ENCODE measurements at regions of chr1 and their contacts with region 1.

Region 1: DNA sequence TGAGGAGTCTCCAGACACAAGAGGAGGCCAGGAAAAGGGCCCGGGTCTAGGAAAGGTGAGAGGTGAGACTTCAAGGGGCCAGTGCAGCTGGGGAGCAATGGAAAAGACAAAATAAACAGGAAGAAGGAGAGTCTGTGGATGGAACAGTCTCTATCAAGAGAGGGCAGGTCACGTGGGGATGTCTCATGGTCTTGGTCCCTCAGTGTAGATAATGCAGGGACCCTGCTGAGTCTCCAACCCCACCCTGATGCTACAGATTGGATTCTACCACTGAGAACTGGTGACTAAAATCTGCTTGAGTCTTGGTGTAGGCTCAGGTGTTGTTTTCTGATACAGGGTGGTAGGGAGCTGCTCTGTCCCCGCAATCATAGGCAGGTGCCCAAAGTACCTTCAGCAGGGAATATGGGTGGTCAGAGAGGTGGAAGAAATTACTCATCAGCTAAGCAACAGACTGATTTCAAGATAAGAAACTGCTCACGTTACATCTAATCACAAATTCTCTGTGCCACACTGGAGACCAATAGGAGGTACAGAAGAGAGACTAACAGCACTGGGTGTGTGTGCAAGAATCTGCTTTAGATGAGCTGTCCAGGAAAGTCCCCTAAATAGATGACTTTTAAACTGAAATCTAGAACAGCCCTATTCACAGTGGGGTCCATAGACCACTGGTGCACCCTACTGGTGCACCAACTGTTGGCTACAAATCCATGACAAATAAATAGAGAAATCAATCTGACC is 101.5 kb upstream of the TLR5 start:
- DNase-seq: peak in 1 of 9 donors; percentile 13
- ATAC-seq: peak; percentile 59
- H3K4me3 ChIP-seq: no peak overlapping the region
- H3K4me3 Mint-ChIP-seq: no peak overlapping the region
- H3K27ac ChIP-seq: no peak overlapping the region
- H3K27ac Mint-ChIP-seq: peak overlapping the region in 6 of 9 donors; percentile 1 to 76 (median 22)
- H3K4me1 ChIP-seq: peaks cover 13 to 43% of the 10 kb centered on the region in 2 donors
- H3K4me1 Mint-ChIP-seq: peaks cover 10 to 79% (median 47%) of the 10 kb centered on the region in 7 donors
- H3K27me3 ChIP-seq: no peaks in the 10 kb centered on the region
- H3K27me3 Mint-ChIP-seq: peaks cover 0 to 2% (median 0%) of the 10 kb centered on the region in 5 donors

Region 2: GRCh38 chr1:223133824-223134435 is 110.6 kb before region 1 on chr1:
- CTCF ChIA-PET with region 1: interaction called, 6 read pairs
- POLR2A ChIA-PET with region 1: interaction called, 3 read pairs
- intact Hi-C with region 1: loop called (anchors 1 to 5 kb)
- DNase-seq: peak; percentile 59 to 84 (median 73)
- ATAC-seq: peak; percentile 92
- H3K4me3 ChIP-seq: peak overlapping the region; percentile 41
- H3K4me3 Mint-ChIP-seq: peak overlapping the region; percentile 51 to 84 (median 74)
- H3K27ac ChIP-seq: no peak overlapping the region
- H3K27ac Mint-ChIP-seq: peak overlapping the region in 1 of 9 donors; percentile 41
- H3K4me1 ChIP-seq: peaks cover 4 to 12% of the 10 kb centered on the region in 2 donors
- H3K4me1 Mint-ChIP-seq: peaks cover 13 to 31% (median 22%) of the 10 kb centered on the region in 7 donors
- H3K27me3 ChIP-seq: no peaks in the 10 kb centered on the region
- H3K27me3 Mint-ChIP-seq: peaks cover 0 to 68% (median 5%) of the 10 kb centered on the region in 5 donors

Region 3: DNA sequence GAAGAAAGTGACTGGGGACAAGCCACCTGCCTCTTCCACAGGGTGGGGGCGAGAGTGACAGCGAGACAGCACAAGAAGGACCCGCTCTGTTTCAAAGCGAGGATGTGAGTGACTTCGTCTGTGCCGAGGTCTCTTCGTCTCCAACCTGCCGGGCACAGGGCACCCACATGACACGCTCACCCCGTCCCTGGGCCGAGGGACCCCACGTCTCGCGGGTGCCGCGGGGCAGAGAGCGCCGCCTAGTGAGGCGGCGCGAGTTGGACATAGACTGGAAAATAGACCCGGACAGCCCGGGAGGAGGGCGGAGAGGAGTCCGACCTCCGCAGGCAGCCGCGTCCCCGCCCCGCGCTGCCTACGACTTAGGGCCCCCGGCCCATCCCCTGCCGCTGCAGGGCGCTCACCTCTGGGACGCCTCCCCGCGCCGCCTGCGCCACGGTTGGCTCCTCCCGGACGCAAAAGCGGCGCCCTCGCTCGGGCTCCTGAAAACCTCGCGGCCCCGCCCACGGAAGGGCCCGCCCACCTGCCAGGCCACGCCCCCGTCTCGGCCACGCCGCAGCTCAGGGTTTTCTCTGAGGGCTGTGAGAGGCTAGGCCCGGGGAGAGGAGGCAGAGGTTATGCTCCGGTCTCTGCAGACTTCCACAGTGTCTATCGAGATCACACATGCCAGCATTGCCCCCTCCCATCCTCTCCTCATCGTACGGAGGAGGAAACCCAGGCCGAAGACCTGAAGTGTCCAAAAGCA is 101.6 kb before region 1 on chr1 and contains the start of gene TLR5:
- CTCF ChIA-PET with region 1: interaction called, 5 read pairs
- POLR2A ChIA-PET with region 1: no interaction called
- intact Hi-C with region 1: loop called in 1 of 2 experiments (anchors 2 kb)
- DNase-seq: peak; percentile 81 to 92 (median 87)
- ATAC-seq: peak; percentile 94
- H3K4me3 ChIP-seq: peak within 1 kb of the TSS; percentile 65
- H3K4me3 Mint-ChIP-seq: peak within 1 kb of the TSS; percentile 69 to 89 (median 81)
- H3K27ac ChIP-seq: peak within 1 kb of the TSS; percentile 69
- H3K27ac Mint-ChIP-seq: peak within 1 kb of the TSS in 8 of 9 donors; percentile 48 to 95 (median 90)
- H3K4me1 ChIP-seq: peaks cover 13 to 15% of the 10 kb centered on the region in 2 donors
- H3K4me1 Mint-ChIP-seq: peaks cover 13 to 35% (median 27%) of the 10 kb centered on the region in 7 donors
- H3K27me3 ChIP-seq: no peaks in the 10 kb centered on the region
- H3K27me3 Mint-ChIP-seq: peaks cover 0 to 10% (median 0%) of the 10 kb centered on the region in 5 donors
- total RNA-seq, gene TLR5: 3.1 to 8.0 (median 6.6) TPM in 4 of 5 experiments, not detected in the other

Region 4: GRCh38 chr1:223189903-223190724 is 54.4 kb before region 1 on chr1:
- CTCF ChIA-PET with region 1: no interaction called
- POLR2A ChIA-PET with region 1: no interaction called
- intact Hi-C with region 1: loop called in 1 of 2 experiments (anchors 5 kb)
- DNase-seq: peak in 7 of 9 donors; percentile 5 to 57 (median 13)
- ATAC-seq: peak; percentile 79
- H3K4me3 ChIP-seq: no peak overlapping the region
- H3K4me3 Mint-ChIP-seq: peak overlapping the region; percentile 8 to 76 (median 62)
- H3K27ac ChIP-seq: no peak overlapping the region
- H3K27ac Mint-ChIP-seq: peak overlapping the region; percentile 25 to 90 (median 61)
- H3K4me1 ChIP-seq: peaks cover 9 to 29% of the 10 kb centered on the region in 2 donors
- H3K4me1 Mint-ChIP-seq: peaks cover 10 to 70% (median 63%) of the 10 kb centered on the region in 7 donors
- H3K27me3 ChIP-seq: no peaks in the 10 kb centered on the region
- H3K27me3 Mint-ChIP-seq: peaks cover 0 to 17% (median 0%) of the 10 kb centered on the region in 5 donors

Region 5: GRCh38 chr1:223233410-223234169 is 10.9 kb before region 1 on chr1:
- CTCF ChIA-PET with region 1: no interaction called
- POLR2A ChIA-PET with region 1: interaction called, 4 read pairs
- intact Hi-C with region 1: loop called in 1 of 2 experiments (anchors 1 kb)
- DNase-seq: peak in 1 of 9 donors; percentile 18
- ATAC-seq: no peak
- H3K4me3 ChIP-seq: no peak overlapping the region
- H3K4me3 Mint-ChIP-seq: peak overlapping the region in 5 of 10 donors; percentile 4 to 58 (median 24)
- H3K27ac ChIP-seq: peak overlapping the region; percentile 27
- H3K27ac Mint-ChIP-seq: peak overlapping the region in 8 of 9 donors; percentile 19 to 99 (median 80)
- H3K4me1 ChIP-seq: peaks cover 8 to 64% of the 10 kb centered on the region in 2 donors
- H3K4me1 Mint-ChIP-seq: peaks cover 18 to 82% (median 74%) of the 10 kb centered on the region in 7 donors
- H3K27me3 ChIP-seq: no peaks in the 10 kb centered on the region
- H3K27me3 Mint-ChIP-seq: peaks cover 0 to 4% (median 0%) of the 10 kb centered on the region in 5 donors

Region 6: DNA sequence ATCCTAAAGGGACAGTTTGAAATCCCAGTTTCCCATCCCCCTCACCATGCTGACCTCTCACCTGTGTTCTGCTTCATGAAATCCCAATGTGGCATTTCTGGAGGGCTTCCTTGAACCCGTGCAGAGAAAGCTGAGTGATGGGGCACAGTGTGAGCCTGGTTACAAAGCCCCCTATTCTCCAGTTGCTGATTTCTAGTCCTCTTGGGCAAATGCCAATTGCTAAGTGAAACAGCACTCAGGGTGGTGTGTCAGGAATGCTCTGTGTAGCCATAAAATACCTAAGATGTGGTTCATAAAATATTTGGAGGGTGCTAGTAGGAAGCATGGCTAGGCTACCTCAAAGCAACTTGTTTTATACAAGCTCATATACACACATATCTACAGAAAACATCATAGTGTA is 87.4 kb after region 1 on chr1:
- CTCF ChIA-PET with region 1: no interaction called
- POLR2A ChIA-PET with region 1: no interaction called
- intact Hi-C with region 1: loop called in 1 of 2 experiments (anchors 5 kb)
- DNase-seq: no peak
- ATAC-seq: no peak
- H3K4me3 ChIP-seq: no peak overlapping the region
- H3K4me3 Mint-ChIP-seq: peak overlapping the region in 1 of 10 donors; percentile 60
- H3K27ac ChIP-seq: no peak overlapping the region
- H3K27ac Mint-ChIP-seq: peak overlapping the region in 3 of 9 donors; percentile 77 to 88 (median 80)
- H3K4me1 ChIP-seq: peaks cover 0 to 15% of the 10 kb centered on the region in 2 donors
- H3K4me1 Mint-ChIP-seq: peaks cover 0 to 36% (median 21%) of the 10 kb centered on the region in 7 donors
- H3K27me3 ChIP-seq: no peaks in the 10 kb centered on the region
- H3K27me3 Mint-ChIP-seq: no peaks in the 10 kb centered on the region

Region 7: DNA sequence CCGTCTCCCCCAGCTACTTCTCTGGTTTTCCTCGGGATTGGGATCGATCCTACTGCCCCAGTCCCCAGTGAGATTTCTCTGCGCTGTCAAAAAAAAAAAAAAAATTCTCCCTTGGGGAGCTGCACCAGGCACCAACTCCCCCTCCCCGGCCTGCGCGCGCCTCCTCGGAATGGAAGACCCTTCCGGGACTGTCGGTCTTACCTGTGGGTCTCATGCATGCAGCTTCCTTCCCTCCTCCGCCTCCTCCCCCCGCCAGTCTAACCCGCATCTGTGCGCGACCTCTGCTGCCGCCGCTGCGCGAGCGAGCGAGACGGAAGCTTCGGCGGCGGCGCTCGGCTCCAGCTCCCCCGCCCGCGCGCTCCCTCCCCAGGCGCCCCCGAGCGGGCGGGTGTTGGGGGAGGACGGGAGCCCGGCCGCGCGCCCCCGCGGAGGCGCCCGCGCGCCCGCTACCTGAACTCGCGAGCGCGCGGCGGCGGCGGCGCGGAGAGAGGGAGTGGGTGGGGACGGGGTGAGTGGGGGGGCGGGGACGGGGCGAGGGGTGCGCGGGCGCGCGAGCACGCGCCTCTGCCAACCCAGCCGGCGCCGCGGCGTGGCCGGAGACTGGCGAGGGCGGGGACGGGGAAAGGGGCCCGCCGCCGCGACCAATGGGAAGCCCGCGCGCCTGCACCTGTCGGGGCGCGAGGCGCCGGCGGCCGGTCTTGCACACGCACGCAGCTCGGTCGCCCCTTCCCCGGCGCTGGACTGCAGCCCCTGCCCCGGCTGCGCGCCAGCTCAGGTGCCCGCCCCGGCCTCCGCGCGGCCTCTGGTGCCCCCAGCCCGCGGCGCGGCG is 119.5 kb after region 1 on chr1 and contains the start of gene SUSD4:
- CTCF ChIA-PET with region 1: no interaction called
- POLR2A ChIA-PET with region 1: no interaction called
- intact Hi-C with region 1: loop called in 1 of 2 experiments (anchors 1 kb)
- DNase-seq: peak; percentile 54 to 87 (median 81)
- ATAC-seq: peak; percentile 92
- H3K4me3 ChIP-seq: peak within 1 kb of the TSS; percentile 83
- H3K4me3 Mint-ChIP-seq: peak within 1 kb of the TSS; percentile 83 to 96 (median 94)
- H3K27ac ChIP-seq: peak within 1 kb of the TSS; percentile 44
- H3K27ac Mint-ChIP-seq: peak within 1 kb of the TSS in 8 of 9 donors; percentile 61 to 91 (median 72)
- H3K4me1 ChIP-seq: no peaks in the 10 kb centered on the region
- H3K4me1 Mint-ChIP-seq: peaks cover 7 to 29% (median 27%) of the 10 kb centered on the region in 7 donors
- H3K27me3 ChIP-seq: no peaks in the 10 kb centered on the region
- H3K27me3 Mint-ChIP-seq: peaks cover 0 to 68% (median 0%) of the 10 kb centered on the region in 5 donors
- total RNA-seq, gene SUSD4: 0.10 to 20.3 (median 7.1) TPM

Measured in naive thymus-derived CD4-positive, alpha-beta T cell (primary cell).